CD8-positive, alpha-beta T cell (primary cell): ENCODE measurements at regions of chr15 and their contacts with region 1.

Region 1: DNA sequence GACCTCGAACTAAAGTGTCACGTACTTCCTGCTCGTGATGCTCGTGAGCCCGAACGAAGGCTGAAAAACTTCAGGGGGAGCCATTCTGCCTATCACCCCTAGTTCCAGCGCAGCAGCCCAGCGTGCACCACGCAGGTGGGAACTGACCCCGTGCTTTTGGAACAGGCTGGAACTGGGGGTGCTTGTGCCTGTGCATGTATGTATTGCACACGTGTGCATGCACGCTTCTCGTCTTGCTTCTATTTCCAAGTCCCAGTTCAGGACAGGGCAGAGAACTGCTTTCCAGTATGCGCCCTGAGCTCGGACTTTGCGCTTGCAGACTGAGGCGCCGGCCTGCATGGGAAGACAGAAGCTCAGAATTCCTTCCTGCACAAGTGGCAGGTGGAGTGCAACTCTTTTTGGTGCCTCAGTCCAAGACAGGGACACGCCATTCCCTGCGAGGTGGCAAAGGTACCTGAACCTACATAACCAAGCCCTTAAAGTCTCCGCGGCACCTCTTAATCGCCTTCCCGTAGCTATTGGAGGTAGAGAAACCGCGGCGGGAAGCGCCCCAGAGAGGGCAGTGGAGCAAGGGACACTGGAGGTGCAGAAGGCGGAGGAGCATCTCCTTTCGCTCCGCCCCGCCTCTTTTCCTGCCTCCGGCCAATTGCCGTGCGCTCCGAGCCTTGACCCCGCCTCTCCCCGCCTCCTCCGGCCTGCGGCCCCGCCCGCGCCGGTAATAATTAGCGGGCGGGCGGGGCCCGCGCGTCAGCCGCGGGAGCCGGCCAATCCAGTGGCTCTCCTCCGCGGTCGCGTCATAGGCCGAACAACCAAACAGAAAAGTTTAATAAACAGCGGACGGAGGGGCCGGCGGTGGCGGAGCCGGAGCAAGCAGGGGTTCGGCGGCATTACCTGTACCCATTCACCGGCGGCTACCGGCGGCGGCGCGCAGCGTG is at the start of gene ZFAND6:
- DNase-seq: peak; percentile 91 to 97 (median 95)
- ATAC-seq: peak; percentile 89
- H3K4me3 ChIP-seq: peak within 1 kb of the TSS; percentile 77 to 95
- H3K4me3 Mint-ChIP-seq: peak within 1 kb of the TSS; percentile 91
- H3K27ac ChIP-seq: peak within 1 kb of the TSS; percentile 84 to 86
- H3K27ac Mint-ChIP-seq: peak within 1 kb of the TSS; percentile 93
- H3K4me1 ChIP-seq: peaks cover 23% of the 10 kb centered on the region
- H3K4me1 Mint-ChIP-seq: peaks cover 42% of the 10 kb centered on the region
- H3K27me3 ChIP-seq: no peaks in the 10 kb centered on the region
- H3K27me3 Mint-ChIP-seq: no peaks in the 10 kb centered on the region
- CTCF ChIP-seq: no peak
- total RNA-seq, gene ZFAND6: 60.1 to 69.8 TPM

Region 2: GRCh38 chr15:79896637-79897379 is 162.3 kb before region 1 on chr15 and contains the start of gene MTHFS:
- CTCF ChIA-PET with region 1: no interaction called
- POLR2A ChIA-PET with region 1: interaction called, 5 read pairs
- intact Hi-C with region 1: loop called (anchors 1 to 2 kb)
- DNase-seq: peak; percentile 61 to 91 (median 79)
- ATAC-seq: peak; percentile 84
- H3K4me3 ChIP-seq: peak within 1 kb of the TSS; percentile 75 to 96
- H3K4me3 Mint-ChIP-seq: peak within 1 kb of the TSS; percentile 96
- H3K27ac ChIP-seq: peak within 1 kb of the TSS; percentile 94 to 95
- H3K27ac Mint-ChIP-seq: peak within 1 kb of the TSS; percentile 100
- H3K4me1 ChIP-seq: peaks cover 28% of the 10 kb centered on the region
- H3K4me1 Mint-ChIP-seq: peaks cover 40% of the 10 kb centered on the region
- H3K27me3 ChIP-seq: no peaks in the 10 kb centered on the region
- H3K27me3 Mint-ChIP-seq: no peaks in the 10 kb centered on the region
- CTCF ChIP-seq: peak; percentile 36
- total RNA-seq, gene MTHFS: 5.1 to 7.8 TPM

Region 3: DNA sequence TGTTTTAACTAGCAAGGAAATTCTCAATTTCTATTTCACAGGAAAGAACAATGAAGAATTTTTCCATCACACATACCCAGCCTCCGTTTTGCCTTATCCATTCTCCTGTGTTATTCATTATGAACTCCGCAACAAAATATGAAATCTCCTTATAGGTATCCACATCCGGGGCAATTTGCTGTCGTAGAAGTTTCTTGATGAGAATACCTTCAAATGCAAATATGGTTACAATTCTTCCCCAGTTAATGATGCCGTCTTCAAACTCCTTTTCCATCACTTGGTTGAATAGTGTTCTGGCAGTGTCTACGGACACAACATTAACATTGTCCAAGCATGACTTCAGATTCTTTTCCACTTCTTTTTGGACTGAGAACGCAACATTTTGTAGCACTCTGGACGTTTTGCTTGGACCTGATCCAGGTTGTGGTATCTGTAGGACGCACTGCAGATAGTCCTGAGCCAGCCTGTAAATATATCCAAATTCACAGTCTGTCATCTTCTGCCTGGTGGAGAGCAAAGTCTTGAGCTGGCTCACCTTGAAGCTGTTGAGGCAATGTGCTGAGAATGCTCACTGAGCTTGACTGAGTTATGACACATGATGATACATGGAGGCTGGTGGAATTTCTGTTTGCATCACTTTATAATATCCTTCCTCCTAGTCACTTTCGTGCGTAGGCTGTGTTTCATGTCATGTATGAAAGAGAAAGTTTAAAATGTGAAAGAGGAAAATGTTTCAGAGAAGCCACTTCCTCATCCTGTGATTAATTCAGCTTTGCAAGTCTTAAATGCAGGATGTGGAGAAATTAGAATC is 88.3 kb before region 1 on chr15 and contains the start of gene BCL2A1:
- CTCF ChIA-PET with region 1: no interaction called
- POLR2A ChIA-PET with region 1: no interaction called
- intact Hi-C with region 1: loop called (anchors 2 kb)
- DNase-seq: peak in 8 of 9 experiments; percentile 7 to 86 (median 55)
- ATAC-seq: peak; percentile 85
- H3K4me3 ChIP-seq: peak within 1 kb of the TSS; percentile 59 to 68
- H3K4me3 Mint-ChIP-seq: peak within 1 kb of the TSS; percentile 92
- H3K27ac ChIP-seq: peak within 1 kb of the TSS; percentile 73 to 76
- H3K27ac Mint-ChIP-seq: peak within 1 kb of the TSS; percentile 96
- H3K4me1 ChIP-seq: peaks cover 40% of the 10 kb centered on the region
- H3K4me1 Mint-ChIP-seq: peaks cover 57% of the 10 kb centered on the region
- H3K27me3 ChIP-seq: no peaks in the 10 kb centered on the region
- H3K27me3 Mint-ChIP-seq: no peaks in the 10 kb centered on the region
- CTCF ChIP-seq: no peak
- total RNA-seq, gene BCL2A1: 24.5 to 27.1 TPM

Region 4: DNA sequence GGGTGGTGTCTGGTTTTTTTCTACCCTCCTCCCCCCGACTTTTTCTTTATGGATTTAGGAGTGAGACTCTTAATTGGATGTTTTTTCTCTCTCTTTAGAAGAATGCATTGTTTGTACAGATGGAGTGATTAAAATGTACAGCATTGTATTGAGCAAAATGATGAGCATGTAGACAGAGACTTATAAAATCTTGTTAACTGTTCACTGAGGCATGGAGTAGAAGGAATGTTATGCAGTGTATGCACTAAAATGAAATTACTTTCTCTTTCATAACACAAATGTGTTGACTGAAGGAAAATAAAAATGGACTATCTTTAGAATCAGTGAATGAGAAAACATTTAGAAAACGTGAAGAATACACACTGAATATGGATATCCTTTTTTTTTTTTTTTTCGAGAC is 40.1 kb after region 1 on chr15:
- CTCF ChIA-PET with region 1: no interaction called
- POLR2A ChIA-PET with region 1: no interaction called
- intact Hi-C with region 1: loop called in 1 of 2 experiments (anchors 5 kb)
- DNase-seq: no peak
- ATAC-seq: no peak
- H3K4me3 ChIP-seq: no peak overlapping the region
- H3K4me3 Mint-ChIP-seq: no peak overlapping the region
- H3K27ac ChIP-seq: no peak overlapping the region
- H3K27ac Mint-ChIP-seq: no peak overlapping the region
- H3K4me1 ChIP-seq: peaks cover under 1% of the 10 kb centered on the region
- H3K4me1 Mint-ChIP-seq: peaks cover 47% of the 10 kb centered on the region
- H3K27me3 ChIP-seq: no peaks in the 10 kb centered on the region
- H3K27me3 Mint-ChIP-seq: no peaks in the 10 kb centered on the region
- CTCF ChIP-seq: no peak

Region 5: GRCh38 chr15:80173022-80173759 is 114.1 kb after region 1 on chr15:
- CTCF ChIA-PET with region 1: interaction called, 6 read pairs
- POLR2A ChIA-PET with region 1: no interaction called
- intact Hi-C with region 1: loop called in 1 of 2 experiments (anchors 1 kb)
- DNase-seq: peak; percentile 52 to 81 (median 69)
- ATAC-seq: peak; percentile 77
- H3K4me3 ChIP-seq: no peak overlapping the region
- H3K4me3 Mint-ChIP-seq: no peak overlapping the region
- H3K27ac ChIP-seq: no peak overlapping the region
- H3K27ac Mint-ChIP-seq: no peak overlapping the region
- H3K4me1 ChIP-seq: no peaks in the 10 kb centered on the region
- H3K4me1 Mint-ChIP-seq: no peaks in the 10 kb centered on the region
- H3K27me3 ChIP-seq: no peaks in the 10 kb centered on the region
- H3K27me3 Mint-ChIP-seq: no peaks in the 10 kb centered on the region
- CTCF ChIP-seq: peak; percentile 76

Region 6: DNA sequence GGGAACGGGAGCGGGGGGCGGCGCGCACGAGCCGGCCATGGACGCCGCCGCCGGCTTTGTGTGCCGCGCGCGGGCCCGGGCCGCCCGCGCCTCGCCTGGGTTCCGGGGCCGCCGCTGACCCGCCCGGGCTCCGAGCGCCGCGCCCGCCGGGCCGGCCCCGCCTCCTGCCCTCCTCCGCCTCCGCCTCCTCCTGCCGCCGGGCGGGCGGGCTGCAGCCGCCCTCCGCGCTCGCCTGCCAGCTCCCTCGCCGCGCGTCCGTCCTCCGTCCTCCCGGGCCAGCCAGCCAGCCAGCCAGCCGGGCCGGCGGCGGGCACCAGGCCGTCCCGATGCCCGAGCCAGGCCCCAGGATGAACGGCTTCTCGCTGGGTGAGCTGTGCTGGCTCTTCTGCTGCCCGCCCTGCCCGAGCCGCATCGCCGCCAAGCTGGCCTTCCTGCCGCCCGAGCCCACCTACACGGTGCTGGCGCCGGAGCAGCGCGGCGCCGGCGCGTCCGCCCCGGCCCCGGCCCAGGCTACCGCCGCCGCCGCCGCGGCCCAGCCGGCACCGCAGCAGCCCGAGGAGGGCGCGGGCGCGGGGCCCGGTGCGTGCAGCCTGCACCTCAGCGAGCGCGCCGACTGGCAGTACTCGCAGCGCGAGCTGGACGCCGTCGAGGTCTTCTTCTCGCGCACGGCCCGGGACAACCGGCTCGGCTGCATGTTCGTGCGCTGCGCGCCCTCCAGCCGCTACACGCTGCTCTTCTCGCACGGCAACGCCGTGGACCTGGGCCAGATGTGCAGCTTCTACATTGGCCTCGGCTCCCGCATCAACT is 636.2 kb after region 1 on chr15 and contains the start of gene ABHD17C:
- CTCF ChIA-PET with region 1: no interaction called
- POLR2A ChIA-PET with region 1: no interaction called
- intact Hi-C with region 1: loop called in 1 of 2 experiments (anchors 5 kb)
- DNase-seq: peak in 8 of 9 experiments; percentile 14 to 70 (median 42)
- ATAC-seq: peak; percentile 69
- H3K4me3 ChIP-seq: peak within 1 kb of the TSS; percentile 58 to 63
- H3K4me3 Mint-ChIP-seq: peak within 1 kb of the TSS; percentile 95
- H3K27ac ChIP-seq: peak within 1 kb of the TSS; percentile 20 to 57
- H3K27ac Mint-ChIP-seq: peak within 1 kb of the TSS; percentile 86
- H3K4me1 ChIP-seq: peaks cover 11% of the 10 kb centered on the region
- H3K4me1 Mint-ChIP-seq: peaks cover 23% of the 10 kb centered on the region
- H3K27me3 ChIP-seq: no peaks in the 10 kb centered on the region
- H3K27me3 Mint-ChIP-seq: peaks cover 3% of the 10 kb centered on the region
- CTCF ChIP-seq: no peak
- total RNA-seq, gene ABHD17C: 0.75 to 1.1 TPM